PC-3 (cell line): ENCODE measurements at regions of chr20 and their contacts with region 1.

Region 1: DNA sequence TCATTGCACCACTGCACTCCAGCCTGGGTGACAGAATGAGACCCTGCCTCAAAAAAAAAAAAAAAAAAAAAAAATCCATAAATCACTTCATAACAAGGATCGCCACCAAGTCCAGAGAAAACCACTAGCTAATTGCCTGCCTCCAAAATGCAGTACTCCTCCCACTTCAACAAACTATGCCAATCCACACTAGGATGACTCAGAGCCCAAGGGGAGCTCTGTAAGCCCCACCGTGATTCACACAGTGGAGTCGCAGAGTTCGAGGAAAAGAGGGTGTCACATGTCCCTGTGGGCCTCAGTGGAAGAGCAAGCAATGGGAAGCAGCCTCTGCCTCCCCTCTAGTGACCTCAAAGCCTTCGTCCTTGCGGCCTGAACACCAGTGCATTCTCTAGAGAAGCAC is 9.1 kb downstream of the SNHG17 start:
- DNase-seq: peak; percentile 80
- ATAC-seq: peak; percentile 87
- H3K4me3 ChIP-seq: no peak overlapping the region
- H3K27ac ChIP-seq: peak overlapping the region; percentile 10; the same call in 1 of the 2 replicates
- H3K4me1 ChIP-seq: peaks cover 25% of the 10 kb centered on the region
- H3K27me3 ChIP-seq: no peaks in the 10 kb centered on the region
- CTCF ChIP-seq: no peak

Region 2: DNA sequence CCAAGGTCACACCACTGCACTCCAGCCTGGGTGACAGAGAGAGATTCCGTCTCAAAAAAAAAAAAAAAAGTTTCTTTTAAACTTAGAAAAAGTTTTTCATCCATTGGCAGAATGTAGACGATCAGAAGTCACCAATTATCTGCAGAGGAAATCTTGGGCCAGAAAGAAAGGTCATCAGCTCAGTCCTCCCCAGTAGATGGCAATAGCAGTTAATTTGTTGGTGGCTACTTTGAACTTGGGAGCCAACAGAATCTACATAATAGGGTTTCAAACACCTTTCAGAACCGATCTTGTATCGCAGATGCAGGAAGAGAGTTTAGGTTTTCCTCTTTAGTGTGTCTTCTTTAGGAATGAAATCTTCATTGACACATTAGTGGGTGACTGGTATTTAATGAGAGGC is 38.1 kb before region 1 on chr20:
- CTCF ChIA-PET with region 1: no interaction called
- POLR2A ChIA-PET with region 1: interaction called, 15 read pairs
- intact Hi-C with region 1: no loop called
- DNase-seq: peak; percentile 7
- ATAC-seq: peak; percentile 48; the same call in 1 of the 2 replicates
- H3K4me3 ChIP-seq: no peak overlapping the region
- H3K27ac ChIP-seq: no peak overlapping the region
- H3K4me1 ChIP-seq: no peaks in the 10 kb centered on the region
- H3K27me3 ChIP-seq: no peaks in the 10 kb centered on the region
- CTCF ChIP-seq: peak; percentile 25; the same call in 1 of the 2 replicates

Region 3: GRCh38 chr20:38962044-38962927 is 536.3 kb after region 1 on chr20 and contains the start of gene DHX35:
- CTCF ChIA-PET with region 1: no interaction called
- POLR2A ChIA-PET with region 1: interaction called, 24 read pairs
- intact Hi-C with region 1: no loop called
- DNase-seq: peak; percentile 97
- ATAC-seq: peak; percentile 99
- H3K4me3 ChIP-seq: peak within 1 kb of the TSS; percentile 91
- H3K27ac ChIP-seq: peak within 1 kb of the TSS; percentile 71
- H3K4me1 ChIP-seq: peaks cover 18% of the 10 kb centered on the region
- H3K27me3 ChIP-seq: no peaks in the 10 kb centered on the region
- CTCF ChIP-seq: peak; percentile 53
- total RNA-seq, gene DHX35: 10.1 and 12.0 TPM in 2 replicates